Mammary epithelial cell (primary cell): ENCODE measurements at regions of chr2 and their contacts with region 1.

Region 1: GRCh38 chr2:55175254-55176025 is 56.7 kb downstream of the CLHC1 start:
- DNase-seq: peak; percentile 48
- H3K4me3 ChIP-seq: no peak overlapping the region
- H3K27ac ChIP-seq: no peak overlapping the region
- H3K4me1 ChIP-seq: no peaks in the 10 kb centered on the region
- H3K27me3 ChIP-seq: no peaks in the 10 kb centered on the region
- CTCF ChIP-seq: peak; percentile 57 to 63

Region 2: GRCh38 chr2:54106631-54107454 is 1068.6 kb before region 1 on chr2:
- CTCF ChIA-PET with region 1: no interaction called
- dilution Hi-C with region 1: no loop called
- in situ Hi-C with region 1: no loop called
- intact Hi-C with region 1: loop called (anchors 10 kb)
- DNase-seq: peak; percentile 43
- H3K4me3 ChIP-seq: no peak overlapping the region
- H3K27ac ChIP-seq: no peak overlapping the region
- H3K4me1 ChIP-seq: peaks cover 33% of the 10 kb centered on the region
- H3K27me3 ChIP-seq: no peaks in the 10 kb centered on the region
- CTCF ChIP-seq: peak; percentile 84 to 90

Region 3: GRCh38 chr2:54723131-54723995 is 452.1 kb before region 1 on chr2 and contains the start of gene EML6:
- CTCF ChIA-PET with region 1: no interaction called
- dilution Hi-C with region 1: loop called (anchors 25 kb)
- in situ Hi-C with region 1: no loop called
- intact Hi-C with region 1: loop called (anchors 5 kb)
- DNase-seq: peak; percentile 99
- H3K4me3 ChIP-seq: peak within 1 kb of the TSS; percentile 79 to 88 (median 82)
- H3K27ac ChIP-seq: peak within 1 kb of the TSS; percentile 89
- H3K4me1 ChIP-seq: peaks cover 27% of the 10 kb centered on the region
- H3K27me3 ChIP-seq: no peaks in the 10 kb centered on the region
- CTCF ChIP-seq: peak in 1 of 2 donors; percentile 27
- total RNA-seq, gene EML6: 0.83 to 0.94 TPM

Region 4: DNA sequence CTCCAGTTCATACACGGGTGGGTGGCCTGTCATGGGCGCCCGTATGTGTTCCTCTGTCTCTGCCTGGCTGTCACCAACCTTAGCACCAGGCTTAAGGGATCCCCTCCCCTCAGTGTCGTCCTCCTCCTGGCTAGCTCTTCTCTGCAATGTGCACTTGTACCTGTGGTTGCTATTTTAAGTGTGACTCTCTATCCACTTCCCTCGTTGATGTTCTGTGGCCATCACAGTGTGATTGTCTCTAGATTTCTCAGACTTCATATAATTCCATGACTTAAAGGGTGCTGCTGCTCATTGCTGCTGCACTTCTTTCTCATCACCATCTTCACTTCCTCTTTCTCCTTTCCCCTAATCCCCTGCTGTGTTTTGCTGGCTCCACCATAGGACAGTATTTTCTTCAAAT is 308.6 kb before region 1 on chr2:
- CTCF ChIA-PET with region 1: no interaction called
- dilution Hi-C with region 1: no loop called
- in situ Hi-C with region 1: loop called in 1 of 2 experiments (anchors 25 kb)
- intact Hi-C with region 1: no loop called
- DNase-seq: no peak
- H3K4me3 ChIP-seq: no peak overlapping the region
- H3K27ac ChIP-seq: no peak overlapping the region
- H3K4me1 ChIP-seq: no peaks in the 10 kb centered on the region
- H3K27me3 ChIP-seq: no peaks in the 10 kb centered on the region
- CTCF ChIP-seq: no peak

Region 5: GRCh38 chr2:55010149-55010591 is 165.3 kb before region 1 on chr2:
- CTCF ChIA-PET with region 1: no interaction called
- dilution Hi-C with region 1: no loop called
- in situ Hi-C with region 1: loop called in 1 of 2 experiments (anchors 10 kb)
- intact Hi-C with region 1: no loop called
- DNase-seq: peak; percentile 85
- H3K4me3 ChIP-seq: peak overlapping the region; percentile 46 to 52 (median 50)
- H3K27ac ChIP-seq: peak overlapping the region; percentile 85
- H3K4me1 ChIP-seq: peaks cover 63% of the 10 kb centered on the region
- H3K27me3 ChIP-seq: no peaks in the 10 kb centered on the region
- CTCF ChIP-seq: no peak

Region 6: DNA sequence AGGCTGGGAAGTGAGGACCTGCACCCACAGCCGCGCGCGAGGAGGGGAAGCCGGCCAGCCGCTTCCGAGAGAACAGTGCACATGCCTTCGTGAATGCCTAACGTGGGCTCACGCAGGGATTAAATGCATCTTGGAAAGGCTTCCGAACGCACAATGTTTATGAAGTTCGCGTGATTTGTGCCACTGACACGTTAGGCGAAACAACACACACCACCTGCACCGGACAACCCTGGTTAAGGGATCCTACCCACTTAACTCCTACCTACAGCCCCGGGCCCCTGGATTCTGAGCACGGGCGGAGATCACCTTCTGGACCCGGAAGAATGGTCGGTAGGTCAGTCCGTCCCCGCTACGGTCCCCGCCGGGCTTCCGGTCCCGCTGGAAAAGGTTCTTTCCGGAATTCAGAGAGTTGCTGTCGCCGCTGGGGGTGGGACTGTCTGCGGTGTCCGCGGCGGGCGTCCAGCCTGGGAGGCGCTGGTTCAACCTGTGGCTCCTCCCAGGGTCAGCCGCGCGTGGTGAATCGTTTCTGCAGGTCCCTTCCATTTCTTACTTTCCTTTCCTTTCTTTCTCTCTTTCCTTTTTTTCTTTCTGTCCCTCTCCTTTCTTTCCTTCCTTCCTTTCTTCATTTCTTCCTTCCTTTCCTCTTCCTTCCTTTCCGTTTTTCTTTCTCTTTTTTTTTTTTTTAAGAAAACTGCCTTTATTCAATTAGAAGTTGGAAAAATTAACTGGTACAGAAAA is 93.6 kb after region 1 on chr2 and contains the start of gene MTIF2:
- CTCF ChIA-PET with region 1: no interaction called
- dilution Hi-C with region 1: no loop called
- in situ Hi-C with region 1: no loop called
- intact Hi-C with region 1: no loop called
- DNase-seq: peak; percentile 92
- H3K4me3 ChIP-seq: peak within 1 kb of the TSS; percentile 60 to 98 (median 61)
- H3K27ac ChIP-seq: peak within 1 kb of the TSS; percentile 78
- H3K4me1 ChIP-seq: peaks cover 5% of the 10 kb centered on the region
- H3K27me3 ChIP-seq: no peaks in the 10 kb centered on the region
- CTCF ChIP-seq: peak in 1 of 2 donors; percentile 18
- total RNA-seq, gene MTIF2: 24.0 to 39.5 TPM

Region 7: GRCh38 chr2:56132138-56132537 is 956.7 kb after region 1 on chr2:
- CTCF ChIA-PET with region 1: no interaction called
- dilution Hi-C with region 1: no loop called
- in situ Hi-C with region 1: no loop called
- intact Hi-C with region 1: loop called (anchors 5 kb)
- DNase-seq: peak; percentile 17
- H3K4me3 ChIP-seq: no peak overlapping the region
- H3K27ac ChIP-seq: no peak overlapping the region
- H3K4me1 ChIP-seq: no peaks in the 10 kb centered on the region
- H3K27me3 ChIP-seq: peaks cover 4% of the 10 kb centered on the region
- CTCF ChIP-seq: peak; percentile 42 to 57